IMR-90 (cell line): ENCODE measurements at regions of chr11 and their contacts with region 1.

Region 1: DNA sequence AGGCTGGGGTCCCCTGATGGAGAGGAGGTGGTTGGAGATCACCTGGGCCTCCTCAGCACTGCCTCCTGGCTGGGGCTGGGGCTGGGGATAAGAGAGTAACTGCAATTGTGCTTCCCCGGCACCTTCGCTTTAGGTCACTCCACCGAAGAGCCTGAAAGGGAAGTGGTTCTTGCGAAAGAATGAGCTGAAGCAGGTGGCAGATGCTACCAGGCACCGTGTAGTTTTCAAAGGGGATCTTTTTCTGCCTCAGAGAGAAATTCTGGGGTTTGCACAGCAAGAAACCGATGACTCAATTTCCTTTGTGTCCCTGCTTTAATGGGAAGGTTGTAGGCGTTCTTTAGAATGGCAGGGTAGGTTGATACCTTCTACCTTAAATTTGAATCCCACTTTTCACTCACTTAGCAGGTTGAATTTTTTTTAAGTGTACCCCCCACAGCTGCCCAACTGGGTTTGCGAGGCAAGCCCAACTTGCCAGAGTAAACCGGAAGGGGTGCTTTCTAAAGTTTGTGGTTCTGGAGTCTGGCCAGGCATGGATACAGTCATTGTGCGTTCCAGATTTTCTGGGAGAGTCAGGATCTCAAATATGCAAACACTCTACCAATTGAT is 5.3 kb downstream of the CD44 start:
- DNase-seq: peak; percentile 84
- ATAC-seq: peak; percentile 10; the same call in 1 of the 2 replicates
- H3K4me3 ChIP-seq: peak overlapping the region; percentile 9; the same call in 1 of the 2 replicates
- H3K27ac ChIP-seq: peak overlapping the region; percentile 86
- H3K4me1 ChIP-seq: peaks cover 33% of the 10 kb centered on the region
- H3K27me3 ChIP-seq: no peaks in the 10 kb centered on the region
- CTCF ChIP-seq: no peak
- POLR2A ChIP-seq: no peak
- RAD21 ChIP-seq: no peak

Region 2: GRCh38 chr11:34997952-34998528 is 146.2 kb before region 1 on chr11:
- CTCF ChIA-PET with region 1: no interaction called
- POLR2A ChIA-PET with region 1: interaction called, 7 read pairs
- dilution Hi-C with region 1: no loop called
- in situ Hi-C with region 1: loop called (anchors 5 kb)
- intact Hi-C with region 1: loop called (anchors 1 kb)
- DNase-seq: peak; percentile 58
- ATAC-seq: peak; percentile 63
- H3K4me3 ChIP-seq: no peak overlapping the region
- H3K27ac ChIP-seq: no peak overlapping the region
- H3K4me1 ChIP-seq: peaks cover 2% of the 10 kb centered on the region
- H3K27me3 ChIP-seq: no peaks in the 10 kb centered on the region
- CTCF ChIP-seq: peak; percentile 63
- POLR2A ChIP-seq: no peak
- RAD21 ChIP-seq: peak; percentile 74

Region 3: GRCh38 chr11:35013514-35014233 is 130.6 kb before region 1 on chr11:
- CTCF ChIA-PET with region 1: no interaction called
- POLR2A ChIA-PET with region 1: interaction called, 4 read pairs
- dilution Hi-C with region 1: no loop called
- in situ Hi-C with region 1: no loop called
- intact Hi-C with region 1: loop called (anchors 5 kb)
- DNase-seq: no peak
- ATAC-seq: no peak
- H3K4me3 ChIP-seq: no peak overlapping the region
- H3K27ac ChIP-seq: peak overlapping the region; percentile 22; the same call in 1 of the 2 replicates
- H3K4me1 ChIP-seq: peaks cover 34% of the 10 kb centered on the region
- H3K27me3 ChIP-seq: no peaks in the 10 kb centered on the region
- CTCF ChIP-seq: no peak
- POLR2A ChIP-seq: no peak
- RAD21 ChIP-seq: no peak

Region 4: GRCh38 chr11:35111161-35112055 is 32.8 kb before region 1 on chr11:
- CTCF ChIA-PET with region 1: no interaction called
- POLR2A ChIA-PET with region 1: no interaction called
- dilution Hi-C with region 1: no loop called
- in situ Hi-C with region 1: no loop called
- intact Hi-C with region 1: no loop called
- DNase-seq: peak; percentile 92
- ATAC-seq: peak; percentile 76
- H3K4me3 ChIP-seq: no peak overlapping the region
- H3K27ac ChIP-seq: peak overlapping the region; percentile 29
- H3K4me1 ChIP-seq: peaks cover 15% of the 10 kb centered on the region
- H3K27me3 ChIP-seq: no peaks in the 10 kb centered on the region
- CTCF ChIP-seq: no peak
- POLR2A ChIP-seq: no peak
- RAD21 ChIP-seq: no peak

Region 5: DNA sequence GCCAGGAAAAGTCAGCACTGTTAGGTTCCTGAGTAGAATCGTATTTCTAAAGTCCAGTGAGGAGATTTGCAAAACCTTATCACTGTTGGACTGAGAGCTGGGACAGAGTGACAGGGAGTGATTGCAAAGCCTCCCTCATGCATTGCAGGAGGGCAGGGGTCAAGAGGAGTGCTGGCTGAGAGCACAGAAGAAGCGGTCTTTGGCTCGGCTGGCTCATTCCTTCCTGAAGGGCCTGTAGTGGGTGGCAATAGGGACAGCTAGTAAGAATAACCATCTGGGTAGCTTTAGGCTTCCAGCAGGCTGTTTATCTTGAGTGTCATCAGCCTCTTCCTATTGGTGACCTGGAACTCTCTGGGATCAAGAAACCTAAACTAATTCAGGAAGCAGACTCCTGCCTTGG is 48.1 kb after region 1 on chr11:
- CTCF ChIA-PET with region 1: no interaction called
- POLR2A ChIA-PET with region 1: interaction called, 3 read pairs
- dilution Hi-C with region 1: no loop called
- in situ Hi-C with region 1: no loop called
- intact Hi-C with region 1: loop called (anchors 2 kb)
- DNase-seq: peak; percentile 38
- ATAC-seq: peak; percentile 45
- H3K4me3 ChIP-seq: no peak overlapping the region
- H3K27ac ChIP-seq: peak overlapping the region; percentile 64
- H3K4me1 ChIP-seq: peaks cover 28% of the 10 kb centered on the region
- H3K27me3 ChIP-seq: no peaks in the 10 kb centered on the region
- CTCF ChIP-seq: no peak
- POLR2A ChIP-seq: no peak
- RAD21 ChIP-seq: no peak

Region 6: DNA sequence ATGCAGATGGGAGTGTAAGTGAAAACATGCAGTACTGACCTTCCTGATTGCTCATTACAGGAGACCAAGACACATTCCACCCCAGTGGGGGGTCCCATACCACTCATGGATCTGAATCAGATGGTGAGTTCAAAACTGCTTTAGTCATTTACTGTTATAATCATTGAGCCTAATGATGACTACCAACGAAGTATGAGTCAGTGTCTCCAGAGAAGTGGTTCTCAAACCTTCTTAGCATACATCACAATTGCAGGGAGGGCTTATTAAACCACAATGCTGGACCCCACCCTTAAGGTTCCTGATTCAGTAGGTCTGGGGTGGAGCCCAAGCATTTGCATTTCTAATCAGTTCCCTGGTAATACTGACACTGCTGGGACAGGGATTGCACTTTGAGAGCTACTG is 70.6 kb after region 1 on chr11:
- CTCF ChIA-PET with region 1: no interaction called
- POLR2A ChIA-PET with region 1: no interaction called
- dilution Hi-C with region 1: no loop called
- in situ Hi-C with region 1: no loop called
- intact Hi-C with region 1: loop called (anchors 5 kb)
- DNase-seq: peak; percentile 97
- ATAC-seq: peak; percentile 47
- H3K4me3 ChIP-seq: no peak overlapping the region
- H3K27ac ChIP-seq: peak overlapping the region; percentile 61
- H3K4me1 ChIP-seq: peaks cover 39% of the 10 kb centered on the region
- H3K27me3 ChIP-seq: no peaks in the 10 kb centered on the region
- CTCF ChIP-seq: no peak
- POLR2A ChIP-seq: no peak
- RAD21 ChIP-seq: peak; percentile 17

Region 7: DNA sequence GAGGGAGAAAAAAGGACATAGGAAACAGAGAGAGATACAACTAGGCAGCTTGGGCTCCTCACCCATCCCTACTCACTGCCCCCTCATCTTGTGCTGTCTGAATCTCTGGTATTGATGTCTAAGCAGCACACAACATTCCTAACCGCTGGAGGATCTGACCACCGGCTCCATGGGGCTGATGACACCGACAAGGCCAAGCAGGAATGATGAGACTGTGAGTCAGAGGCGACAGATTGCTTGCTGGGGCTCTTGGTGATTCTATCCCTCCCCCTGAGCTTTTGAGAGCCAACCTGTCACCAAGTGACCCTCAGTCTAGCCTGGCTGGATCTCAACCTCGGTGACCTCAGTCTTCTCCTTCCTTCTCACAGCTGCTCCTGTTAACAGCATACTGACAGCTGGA is 367.4 kb after region 1 on chr11:
- CTCF ChIA-PET with region 1: no interaction called
- POLR2A ChIA-PET with region 1: no interaction called
- dilution Hi-C with region 1: no loop called
- in situ Hi-C with region 1: no loop called
- intact Hi-C with region 1: no loop called
- DNase-seq: peak; percentile 91
- ATAC-seq: peak; percentile 86
- H3K4me3 ChIP-seq: no peak overlapping the region
- H3K27ac ChIP-seq: peak overlapping the region; percentile 39
- H3K4me1 ChIP-seq: peaks cover 14% of the 10 kb centered on the region
- H3K27me3 ChIP-seq: no peaks in the 10 kb centered on the region
- CTCF ChIP-seq: no peak
- POLR2A ChIP-seq: no peak
- RAD21 ChIP-seq: peak; percentile 25; the same call in 1 of the 2 replicates